ENCODE measurements at regions of chr1 and their contacts with region 1.

Region 1: GRCh38 chr1:159798893-159799292 is 3.3 kb upstream of the FCRL6 start:
- DNase-seq: peak; percentile 6 to 77 (median 46)
- ATAC-seq: no peak
- H3K4me3 ChIP-seq: no peak overlapping the region
- H3K4me3 Mint-ChIP-seq: no peak overlapping the region
- H3K27ac ChIP-seq: no peak overlapping the region
- H3K27ac Mint-ChIP-seq: no peak overlapping the region
- H3K4me1 ChIP-seq: peaks cover 22% of the 10 kb centered on the region
- H3K4me1 Mint-ChIP-seq: peaks cover 46% of the 10 kb centered on the region
- H3K27me3 ChIP-seq: no peaks in the 10 kb centered on the region
- H3K27me3 Mint-ChIP-seq: peaks cover 1% of the 10 kb centered on the region
- CTCF ChIP-seq: peak; percentile 68

Region 2: GRCh38 chr1:159214149-159214760 is 584.6 kb before region 1 on chr1:
- CTCF ChIA-PET with region 1: interaction called, 11 read pairs
- POLR2A ChIA-PET with region 1: no interaction called
- intact Hi-C with region 1: loop called in 1 of 2 experiments (anchors 5 kb)
- DNase-seq: peak in 7 of 9 experiments; percentile 6 to 60 (median 32)
- ATAC-seq: no peak
- H3K4me3 ChIP-seq: no peak overlapping the region
- H3K4me3 Mint-ChIP-seq: no peak overlapping the region
- H3K27ac ChIP-seq: no peak overlapping the region
- H3K27ac Mint-ChIP-seq: no peak overlapping the region
- H3K4me1 ChIP-seq: no peaks in the 10 kb centered on the region
- H3K4me1 Mint-ChIP-seq: no peaks in the 10 kb centered on the region
- H3K27me3 ChIP-seq: peaks cover 0 to 4% of the 10 kb centered on the region in 2 experiments
- H3K27me3 Mint-ChIP-seq: peaks cover 36% of the 10 kb centered on the region
- CTCF ChIP-seq: peak; percentile 95

Region 3: DNA sequence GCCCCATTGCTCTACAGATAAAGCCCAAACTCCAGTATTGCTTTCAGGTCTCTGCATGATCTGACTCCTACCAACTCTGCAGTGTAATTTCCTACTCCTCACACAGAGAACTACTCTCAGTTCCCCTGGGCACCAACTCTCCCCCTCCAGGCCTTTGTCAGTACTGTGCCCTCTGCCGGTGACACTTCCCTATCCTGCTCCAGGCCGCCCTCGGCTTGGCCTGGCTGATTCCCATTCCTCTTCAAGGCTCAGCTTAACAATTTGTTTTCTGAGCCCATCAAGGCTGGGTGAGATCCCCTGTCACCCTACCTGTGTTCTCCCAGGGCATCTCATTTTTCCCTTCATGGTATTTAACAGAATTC is 30.4 kb after region 1 on chr1:
- CTCF ChIA-PET with region 1: interaction called, 18 read pairs
- POLR2A ChIA-PET with region 1: interaction called, 6 read pairs
- intact Hi-C with region 1: loop called in 1 of 2 experiments (anchors 2 kb)
- DNase-seq: peak in 1 of 9 experiments; percentile 28
- ATAC-seq: no peak
- H3K4me3 ChIP-seq: no peak overlapping the region
- H3K4me3 Mint-ChIP-seq: peak overlapping the region; percentile 57
- H3K27ac ChIP-seq: no peak overlapping the region
- H3K27ac Mint-ChIP-seq: no peak overlapping the region
- H3K4me1 ChIP-seq: peaks cover 49% of the 10 kb centered on the region
- H3K4me1 Mint-ChIP-seq: peaks cover 56% of the 10 kb centered on the region
- H3K27me3 ChIP-seq: no peaks in the 10 kb centered on the region
- H3K27me3 Mint-ChIP-seq: no peaks in the 10 kb centered on the region
- CTCF ChIP-seq: no peak

Region 4: GRCh38 chr1:159854693-159855192 is 55.9 kb after region 1 on chr1:
- CTCF ChIA-PET with region 1: interaction called, 31 read pairs
- POLR2A ChIA-PET with region 1: interaction called, 3 read pairs
- intact Hi-C with region 1: no loop called
- DNase-seq: peak; percentile 47 to 88 (median 77)
- ATAC-seq: peak; percentile 93
- H3K4me3 ChIP-seq: peak overlapping the region; percentile 70 to 71
- H3K4me3 Mint-ChIP-seq: peak overlapping the region; percentile 92
- H3K27ac ChIP-seq: peak overlapping the region; percentile 70 to 80
- H3K27ac Mint-ChIP-seq: peak overlapping the region; percentile 93
- H3K4me1 ChIP-seq: peaks cover 18% of the 10 kb centered on the region
- H3K4me1 Mint-ChIP-seq: peaks cover 37% of the 10 kb centered on the region
- H3K27me3 ChIP-seq: no peaks in the 10 kb centered on the region
- H3K27me3 Mint-ChIP-seq: no peaks in the 10 kb centered on the region
- CTCF ChIP-seq: no peak

Region 5: DNA sequence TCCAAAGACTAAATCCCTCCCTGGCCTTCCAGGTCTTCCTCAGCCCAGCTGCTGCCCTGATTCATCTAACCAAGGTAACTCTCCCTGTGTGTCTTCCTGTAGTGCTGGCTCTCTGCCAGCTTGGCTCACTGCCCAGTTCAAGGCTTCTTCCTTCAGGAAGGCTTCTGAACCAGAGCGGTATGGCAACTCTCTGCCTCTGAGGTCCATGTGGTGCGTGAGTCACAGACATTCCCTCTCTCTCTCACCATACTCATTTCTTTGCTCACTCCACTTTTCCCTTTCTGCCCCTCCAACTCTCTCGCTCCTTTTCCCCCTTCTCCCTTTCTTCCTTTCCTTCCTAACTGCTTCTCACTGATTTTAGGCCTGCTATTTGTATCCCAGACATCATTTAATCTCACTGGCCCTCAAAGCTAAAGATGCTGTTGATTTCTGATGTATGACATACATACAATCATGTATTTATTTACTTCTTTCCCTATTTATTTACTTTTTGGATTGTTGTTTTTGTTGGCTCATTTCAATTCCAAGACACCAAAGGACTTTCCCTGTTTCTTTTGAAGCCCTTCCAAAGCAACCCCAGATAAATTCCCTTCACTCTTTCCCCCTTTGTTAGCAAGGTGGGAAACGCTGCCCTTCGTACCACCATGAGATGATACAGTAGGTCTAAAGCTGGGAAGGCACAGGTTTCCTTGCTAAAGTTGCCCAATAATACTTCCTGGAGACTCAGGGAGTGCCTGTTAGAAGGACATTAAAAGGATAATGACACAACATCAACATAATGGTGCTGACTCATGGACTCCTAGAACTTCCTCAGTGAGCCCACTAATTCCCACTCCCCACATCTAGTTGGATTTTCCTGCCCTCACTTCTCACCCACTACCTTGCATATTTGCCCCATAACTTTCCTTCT is 83.3 kb after region 1 on chr1:
- CTCF ChIA-PET with region 1: interaction called, 531 read pairs
- POLR2A ChIA-PET with region 1: no interaction called
- intact Hi-C with region 1: no loop called
- DNase-seq: peak in 8 of 9 experiments; percentile 8 to 64 (median 44)
- ATAC-seq: no peak
- H3K4me3 ChIP-seq: no peak overlapping the region
- H3K4me3 Mint-ChIP-seq: no peak overlapping the region
- H3K27ac ChIP-seq: no peak overlapping the region
- H3K27ac Mint-ChIP-seq: no peak overlapping the region
- H3K4me1 ChIP-seq: peaks cover 5% of the 10 kb centered on the region
- H3K4me1 Mint-ChIP-seq: no peaks in the 10 kb centered on the region
- H3K27me3 ChIP-seq: no peaks in the 10 kb centered on the region
- H3K27me3 Mint-ChIP-seq: peaks cover 3% of the 10 kb centered on the region
- CTCF ChIP-seq: no peak